Spleen (tissue), 13 donors: ENCODE measurements at regions of chr17 and their contacts with region 1.

Region 1: DNA sequence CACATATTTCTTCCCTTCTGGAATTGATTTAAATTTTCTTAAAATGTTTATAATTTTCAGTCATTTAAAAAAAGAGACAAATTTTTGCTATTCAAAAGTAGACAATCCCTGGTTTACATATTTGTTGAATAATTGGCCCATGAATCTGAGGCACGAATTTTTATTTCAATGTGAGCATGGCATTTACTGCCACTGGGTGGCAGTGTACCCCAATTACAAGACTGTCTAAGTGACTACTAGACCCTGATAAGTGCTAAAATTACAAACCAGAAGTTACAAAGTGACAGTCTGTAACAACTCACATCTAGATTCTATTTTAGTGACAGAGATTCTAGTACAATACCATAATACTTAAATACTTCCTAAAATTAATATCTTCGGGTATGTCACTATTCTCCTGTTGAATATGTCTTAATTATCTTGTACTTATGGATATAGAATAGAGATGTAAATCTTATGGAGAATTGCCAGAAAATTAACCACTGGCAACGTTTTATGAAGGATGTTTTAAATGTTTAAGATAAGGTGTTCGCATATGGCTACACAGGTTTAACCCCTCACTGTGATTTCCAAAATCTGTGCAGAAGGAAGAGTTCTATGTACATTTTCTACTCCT is 235.8 kb downstream of the MAP2K4 start:
- DNase-seq: no peak
- H3K4me3 ChIP-seq: no peak overlapping the region
- H3K27ac ChIP-seq: no peak overlapping the region
- H3K4me1 ChIP-seq: no peaks in the 10 kb centered on the region
- H3K27me3 ChIP-seq: no peaks in the 10 kb centered on the region
- CTCF ChIP-seq: peak; percentile 31 to 71 (median 63)
- POLR2A ChIP-seq: no peak

Region 2: DNA sequence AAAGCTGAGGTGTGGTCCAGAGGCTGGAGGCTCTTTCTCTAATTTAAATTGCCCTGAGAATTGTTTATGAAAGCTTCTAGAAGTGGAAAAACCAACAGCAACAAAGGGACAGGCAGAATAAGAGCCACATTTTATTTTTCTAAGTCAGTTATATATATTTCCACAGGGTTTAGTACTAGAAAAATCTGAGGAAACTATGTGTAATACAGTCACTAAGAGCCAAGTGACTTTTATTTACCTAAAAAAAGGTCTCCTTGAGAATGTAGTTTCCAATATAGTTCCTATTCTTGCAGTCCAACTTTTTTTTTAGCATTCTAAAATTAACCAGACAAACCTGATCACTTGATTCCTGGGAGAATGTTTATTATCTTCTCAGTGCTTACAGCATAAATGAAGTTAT is 112.6 kb after region 1 on chr17:
- intact Hi-C with region 1: no loop called
- DNase-seq: no peak
- H3K4me3 ChIP-seq: no peak overlapping the region
- H3K27ac ChIP-seq: no peak overlapping the region
- H3K4me1 ChIP-seq: no peaks in the 10 kb centered on the region
- H3K27me3 ChIP-seq: no peaks in the 10 kb centered on the region
- CTCF ChIP-seq: no peak
- POLR2A ChIP-seq: no peak

Region 3: GRCh38 chr17:12667299-12667958 is 410.9 kb after region 1 on chr17:
- intact Hi-C with region 1: loop called (anchors 5 kb)
- DNase-seq: no peak
- H3K4me3 ChIP-seq: no peak overlapping the region
- H3K27ac ChIP-seq: no peak overlapping the region
- H3K4me1 ChIP-seq: peaks cover 0 to 16% (median 11%) of the 10 kb centered on the region in 6 donors
- H3K27me3 ChIP-seq: peaks cover 0 to 53% (median 33%) of the 10 kb centered on the region in 7 donors
- CTCF ChIP-seq: peak in 2 of 11 experiments; percentile 26 to 39
- POLR2A ChIP-seq: no peak

Region 4: GRCh38 chr17:13002766-13003451 is 746.4 kb after region 1 on chr17:
- intact Hi-C with region 1: loop called (anchors 10 kb)
- DNase-seq: no peak
- H3K4me3 ChIP-seq: no peak overlapping the region
- H3K27ac ChIP-seq: no peak overlapping the region
- H3K4me1 ChIP-seq: peaks cover 0 to 10% (median 0%) of the 10 kb centered on the region in 6 donors
- H3K27me3 ChIP-seq: no peaks in the 10 kb centered on the region
- CTCF ChIP-seq: peak in 10 of 11 experiments; percentile 48 to 84 (median 72)
- POLR2A ChIP-seq: no peak